HepG2 (cell line): ENCODE measurements at regions of chr5 and their contacts with region 1.

Region 1: DNA sequence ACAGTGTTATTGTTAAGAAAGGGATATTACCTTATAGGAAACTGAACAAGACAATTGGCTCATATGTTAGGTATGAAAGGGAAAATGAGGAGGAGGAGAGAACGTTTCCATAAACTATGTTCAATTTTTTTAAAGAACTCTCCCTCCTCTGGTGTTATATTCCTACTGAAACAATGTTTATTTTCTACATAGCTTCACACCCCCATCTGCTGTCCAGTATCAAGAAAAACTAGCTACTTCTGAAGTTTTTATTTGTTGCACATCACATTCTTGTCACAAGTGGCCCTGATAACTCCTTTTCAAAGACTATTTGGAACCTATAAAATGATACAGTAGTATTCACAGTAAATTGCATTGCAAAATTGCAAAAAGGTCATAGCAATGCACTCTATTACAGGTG is 223.4 kb upstream of the FAM174A start:
- DNase-seq: no peak
- ATAC-seq: no peak
- H3K4me3 ChIP-seq: no peak overlapping the region
- H3K27ac ChIP-seq: no peak overlapping the region
- H3K4me1 ChIP-seq: no peaks in the 10 kb centered on the region
- H3K27me3 ChIP-seq: no peaks in the 10 kb centered on the region
- CTCF ChIP-seq: no peak
- EP300 ChIP-seq: no peak
- POLR2A ChIP-seq: no peak
- RAD21 ChIP-seq: no peak

Region 2: GRCh38 chr5:99275128-99275527 is 1036.7 kb before region 1 on chr5:
- CTCF ChIA-PET with region 1: no interaction called
- POLR2A ChIA-PET with region 1: no interaction called
- in situ Hi-C with region 1: no loop called
- intact Hi-C with region 1: loop called (anchors 5 kb)
- DNase-seq: no peak
- ATAC-seq: no peak
- H3K4me3 ChIP-seq: no peak overlapping the region
- H3K27ac ChIP-seq: no peak overlapping the region
- H3K4me1 ChIP-seq: no peaks in the 10 kb centered on the region
- H3K27me3 ChIP-seq: no peaks in the 10 kb centered on the region
- CTCF ChIP-seq: no peak
- EP300 ChIP-seq: no peak
- POLR2A ChIP-seq: no peak
- RAD21 ChIP-seq: no peak

Region 3: GRCh38 chr5:100418231-100418630 is 106.4 kb after region 1 on chr5:
- CTCF ChIA-PET with region 1: no interaction called
- POLR2A ChIA-PET with region 1: no interaction called
- in situ Hi-C with region 1: no loop called
- intact Hi-C with region 1: no loop called
- DNase-seq: no peak
- ATAC-seq: no peak
- H3K4me3 ChIP-seq: no peak overlapping the region
- H3K27ac ChIP-seq: no peak overlapping the region
- H3K4me1 ChIP-seq: no peaks in the 10 kb centered on the region
- H3K27me3 ChIP-seq: no peaks in the 10 kb centered on the region
- CTCF ChIP-seq: no peak
- EP300 ChIP-seq: no peak
- POLR2A ChIP-seq: no peak
- RAD21 ChIP-seq: no peak